Calu3 (cell line): ENCODE measurements at regions of chr10 and their contacts with region 1.

Region 1: GRCh38 chr10:4344511-4344994 is 481.5 kb upstream of the AKR1E2 start:
- DNase-seq: peak; percentile 51
- H3K4me3 Mint-ChIP-seq: peak overlapping the region; percentile 54
- H3K27ac Mint-ChIP-seq: peak overlapping the region; percentile 96
- H3K4me1 Mint-ChIP-seq: peaks cover 19% of the 10 kb centered on the region
- H3K27me3 Mint-ChIP-seq: no peaks in the 10 kb centered on the region
- CTCF ChIP-seq: no peak

Region 2: DNA sequence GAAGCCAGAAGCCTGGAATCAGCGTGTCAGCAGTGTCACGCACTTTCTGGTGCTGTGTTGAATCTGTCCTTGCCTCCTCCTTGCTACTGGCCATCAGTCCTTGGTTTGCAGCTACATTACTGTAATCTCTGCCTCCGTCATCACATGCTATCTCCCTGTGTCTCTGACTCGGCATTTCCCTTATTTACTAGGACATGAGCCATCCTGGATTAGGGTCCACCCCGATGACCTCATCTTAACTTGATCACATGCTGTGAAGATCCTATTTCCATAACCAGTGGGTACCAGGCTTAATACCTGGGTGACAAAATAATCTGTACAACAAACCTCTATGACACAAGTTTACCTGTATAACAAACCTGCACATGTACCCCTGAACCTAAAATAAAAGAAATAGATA is 41.5 kb before region 1 on chr10:
- CTCF ChIA-PET with region 1: no interaction called
- intact Hi-C with region 1: no loop called
- DNase-seq: no peak
- H3K4me3 Mint-ChIP-seq: no peak overlapping the region
- H3K27ac Mint-ChIP-seq: no peak overlapping the region
- H3K4me1 Mint-ChIP-seq: no peaks in the 10 kb centered on the region
- H3K27me3 Mint-ChIP-seq: no peaks in the 10 kb centered on the region
- CTCF ChIP-seq: no peak

Region 3: GRCh38 chr10:4391683-4392082 is 47.1 kb after region 1 on chr10:
- CTCF ChIA-PET with region 1: no interaction called
- intact Hi-C with region 1: loop called (anchors 1 kb)
- DNase-seq: peak; percentile 46
- H3K4me3 Mint-ChIP-seq: no peak overlapping the region
- H3K27ac Mint-ChIP-seq: no peak overlapping the region
- H3K4me1 Mint-ChIP-seq: peaks cover 7% of the 10 kb centered on the region
- H3K27me3 Mint-ChIP-seq: no peaks in the 10 kb centered on the region
- CTCF ChIP-seq: no peak